PC-3 (cell line): ENCODE measurements at regions of chr18 and their contacts with region 1.

Region 1: DNA sequence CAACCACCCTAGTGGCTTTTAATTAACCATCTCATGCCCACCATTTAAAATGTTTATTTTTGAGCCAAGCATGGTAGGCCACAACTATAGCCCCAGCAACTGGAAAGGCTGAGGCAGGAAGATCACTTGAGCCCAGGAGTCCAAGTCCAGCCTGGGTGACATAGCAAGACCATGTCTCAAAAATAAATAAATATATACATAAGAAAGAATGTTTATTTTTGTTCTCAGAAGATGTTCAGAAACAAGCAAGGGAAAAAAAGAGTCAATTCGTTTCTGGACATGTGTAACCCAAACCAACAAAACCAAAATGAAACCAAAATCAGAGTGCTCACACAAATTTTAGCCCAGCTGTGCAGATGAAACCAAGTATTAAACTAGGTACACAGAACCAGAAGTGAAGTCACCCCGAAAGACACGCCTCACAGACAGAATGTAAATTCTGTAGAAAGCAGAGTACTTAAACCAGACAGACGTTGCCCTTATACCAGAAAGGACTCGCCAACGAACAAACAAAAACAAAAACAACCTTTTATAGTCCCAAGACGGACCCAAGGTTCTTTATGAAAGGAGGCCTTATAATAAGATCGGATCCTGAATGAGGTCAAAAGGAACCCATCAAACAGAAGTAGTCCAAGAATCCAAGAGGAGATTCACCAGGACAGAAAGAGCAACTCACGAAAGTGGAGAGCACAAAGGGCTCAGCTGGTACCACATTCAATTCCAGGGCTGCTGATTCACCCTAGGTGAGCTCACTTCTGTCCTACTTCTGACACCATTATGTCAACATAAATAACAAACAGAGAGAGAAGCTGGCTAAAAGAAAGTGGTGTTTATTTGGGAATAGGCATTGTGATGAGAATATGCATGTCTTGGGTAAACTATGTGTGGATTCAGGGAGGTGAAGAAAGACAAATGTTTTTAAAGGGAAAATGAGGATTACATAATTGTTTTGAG is 31.8 kb upstream of the MTCL1 start:
- DNase-seq: peak; percentile 81
- ATAC-seq: peak; percentile 88
- H3K4me3 ChIP-seq: no peak overlapping the region
- H3K27ac ChIP-seq: 0 out of 2 replicates have a peak overlapping the region, but pooled peaks have one; percentile 0
- H3K4me1 ChIP-seq: peaks cover 29% of the 10 kb centered on the region
- H3K27me3 ChIP-seq: no peaks in the 10 kb centered on the region
- CTCF ChIP-seq: no peak

Region 2: DNA sequence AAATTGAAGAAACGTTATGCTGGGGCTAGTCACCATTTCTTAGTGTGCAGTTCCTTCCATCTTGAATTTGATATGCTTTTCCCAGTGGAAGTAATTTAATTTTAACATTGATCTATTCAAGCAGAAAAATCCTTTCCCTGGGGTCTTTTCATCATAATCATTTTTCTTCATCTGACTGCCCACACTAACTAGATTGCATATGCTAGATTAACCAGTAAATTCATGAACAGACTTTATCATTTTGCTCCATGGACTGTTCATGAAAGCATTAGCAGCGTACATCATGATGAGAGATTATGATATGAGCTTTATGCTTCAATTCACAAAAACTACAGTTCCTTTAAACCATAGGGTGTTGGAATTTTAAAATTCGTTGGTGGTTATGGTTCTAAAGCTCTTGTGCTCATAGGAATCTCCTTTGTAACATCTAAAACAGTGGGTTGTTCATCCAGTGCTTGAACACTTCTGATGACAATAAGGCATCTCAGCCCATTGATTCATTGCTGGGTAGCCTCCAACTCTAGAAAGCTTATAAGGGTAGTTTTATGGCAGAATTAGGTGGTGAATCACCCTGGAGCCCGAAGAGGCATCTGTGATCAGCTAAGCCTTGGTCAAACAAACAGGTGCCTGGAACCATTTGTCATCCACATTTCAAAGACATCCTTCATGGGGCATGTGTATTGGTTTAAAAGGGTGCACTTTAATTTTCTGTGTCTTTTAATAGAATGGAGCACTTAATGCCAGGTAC is 351.7 kb after region 1 on chr18:
- CTCF ChIA-PET with region 1: no interaction called
- POLR2A ChIA-PET with region 1: interaction called, 19 read pairs
- intact Hi-C with region 1: no loop called
- DNase-seq: peak; percentile 97
- ATAC-seq: peak; percentile 98
- H3K4me3 ChIP-seq: no peak overlapping the region
- H3K27ac ChIP-seq: no peak overlapping the region
- H3K4me1 ChIP-seq: peaks cover 20% of the 10 kb centered on the region
- H3K27me3 ChIP-seq: no peaks in the 10 kb centered on the region
- CTCF ChIP-seq: no peak